MCF 10A (cell line): ENCODE measurements at regions of chr3 and their contacts with region 1.

Region 1: GRCh38 chr3:25648107-25648535 is 16.6 kb downstream of the TOP2B start:
- DNase-seq: peak; percentile 85
- H3K4me3 Mint-ChIP-seq: no peak overlapping the region
- H3K27ac Mint-ChIP-seq: no peak overlapping the region
- H3K4me1 Mint-ChIP-seq: peaks cover 15% of the 10 kb centered on the region
- H3K27me3 Mint-ChIP-seq: no peaks in the 10 kb centered on the region
- CTCF ChIP-seq: peak; percentile 86

Region 2: GRCh38 chr3:25372167-25372566 is 276.0 kb before region 1 on chr3:
- CTCF ChIA-PET with region 1: no interaction called
- POLR2A ChIA-PET with region 1: no interaction called
- intact Hi-C with region 1: no loop called
- DNase-seq: peak; percentile 14
- H3K4me3 Mint-ChIP-seq: no peak overlapping the region
- H3K27ac Mint-ChIP-seq: no peak overlapping the region
- H3K4me1 Mint-ChIP-seq: no peaks in the 10 kb centered on the region
- H3K27me3 Mint-ChIP-seq: no peaks in the 10 kb centered on the region
- CTCF ChIP-seq: no peak

Region 3: DNA sequence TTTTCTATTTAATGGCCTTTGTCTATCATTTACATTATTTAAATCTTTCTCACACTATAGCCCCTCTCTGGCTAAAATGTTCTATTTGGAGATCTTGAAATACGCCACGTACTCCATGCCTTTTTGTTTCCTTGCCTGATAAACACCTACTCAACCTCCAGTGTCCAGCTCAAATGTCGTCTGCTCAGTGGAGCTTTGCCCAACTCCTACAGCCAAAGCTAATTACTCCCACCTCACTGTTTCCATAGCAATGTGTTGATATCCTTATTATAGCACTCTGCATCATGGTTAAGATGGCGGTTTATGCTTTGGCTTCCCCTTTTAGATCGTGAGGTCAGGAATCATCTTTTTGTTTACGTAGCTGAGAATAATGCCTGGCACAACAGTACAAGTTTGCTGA is 79.2 kb after region 1 on chr3:
- CTCF ChIA-PET with region 1: interaction called, 13 read pairs
- POLR2A ChIA-PET with region 1: no interaction called
- intact Hi-C with region 1: no loop called
- DNase-seq: no peak
- H3K4me3 Mint-ChIP-seq: no peak overlapping the region
- H3K27ac Mint-ChIP-seq: no peak overlapping the region
- H3K4me1 Mint-ChIP-seq: no peaks in the 10 kb centered on the region
- H3K27me3 Mint-ChIP-seq: no peaks in the 10 kb centered on the region
- CTCF ChIP-seq: no peak

Region 4: DNA sequence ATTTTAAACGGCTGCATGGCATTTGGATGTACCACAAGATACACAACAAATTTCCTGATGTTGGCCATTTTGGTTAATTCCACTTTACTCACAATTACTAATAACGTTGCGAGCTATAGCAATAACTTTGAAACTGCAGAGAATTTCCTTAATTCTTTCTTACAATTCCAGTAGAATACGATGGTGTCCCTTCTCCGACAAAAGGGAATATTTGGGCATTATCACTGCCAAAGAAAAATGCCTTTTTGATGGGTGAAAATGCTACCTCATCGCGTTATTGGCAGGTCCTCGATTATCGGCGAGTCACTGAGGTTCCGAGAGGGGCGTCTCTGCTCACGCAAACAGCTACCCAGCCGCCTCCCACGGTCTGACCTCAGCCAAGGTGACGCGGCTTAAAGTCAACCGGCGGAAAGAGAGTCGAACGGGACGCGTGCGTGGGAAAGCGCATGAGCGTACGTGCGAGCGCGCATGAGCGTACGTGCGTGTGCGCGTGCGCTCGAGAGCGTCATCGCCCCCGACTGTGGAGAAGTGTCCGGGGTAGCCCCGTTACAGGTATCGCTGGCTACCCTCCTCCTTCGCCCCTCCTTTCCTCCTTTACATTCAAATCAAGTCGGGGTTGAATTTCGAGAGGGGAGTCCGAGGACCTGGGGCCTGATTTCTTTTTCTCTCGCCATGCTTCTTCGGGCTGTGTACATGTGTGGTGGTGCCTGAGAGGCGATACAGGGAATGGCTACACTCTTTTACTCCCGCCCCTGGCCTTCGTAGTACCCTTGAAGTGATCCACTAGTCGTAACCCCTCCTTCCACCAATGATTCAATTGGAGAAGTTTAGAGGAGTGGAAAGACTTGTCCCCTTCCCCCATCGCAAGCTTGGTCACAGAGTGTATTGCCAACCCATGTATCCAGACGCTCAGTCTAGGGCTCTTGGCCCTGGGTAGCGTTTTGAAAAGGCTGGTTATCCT is 141.8 kb after region 1 on chr3 and contains the start of gene OXSM:
- CTCF ChIA-PET with region 1: interaction called, 14 read pairs
- POLR2A ChIA-PET with region 1: interaction called, 5 read pairs
- intact Hi-C with region 1: no loop called
- DNase-seq: peak; percentile 88
- H3K4me3 Mint-ChIP-seq: peak within 1 kb of the TSS; percentile 85
- H3K27ac Mint-ChIP-seq: peak within 1 kb of the TSS; percentile 94
- H3K4me1 Mint-ChIP-seq: peaks cover 32% of the 10 kb centered on the region
- H3K27me3 Mint-ChIP-seq: no peaks in the 10 kb centered on the region
- CTCF ChIP-seq: no peak
- total RNA-seq, gene OXSM: 21.7 and 22.4 TPM in 2 replicates

Region 5: DNA sequence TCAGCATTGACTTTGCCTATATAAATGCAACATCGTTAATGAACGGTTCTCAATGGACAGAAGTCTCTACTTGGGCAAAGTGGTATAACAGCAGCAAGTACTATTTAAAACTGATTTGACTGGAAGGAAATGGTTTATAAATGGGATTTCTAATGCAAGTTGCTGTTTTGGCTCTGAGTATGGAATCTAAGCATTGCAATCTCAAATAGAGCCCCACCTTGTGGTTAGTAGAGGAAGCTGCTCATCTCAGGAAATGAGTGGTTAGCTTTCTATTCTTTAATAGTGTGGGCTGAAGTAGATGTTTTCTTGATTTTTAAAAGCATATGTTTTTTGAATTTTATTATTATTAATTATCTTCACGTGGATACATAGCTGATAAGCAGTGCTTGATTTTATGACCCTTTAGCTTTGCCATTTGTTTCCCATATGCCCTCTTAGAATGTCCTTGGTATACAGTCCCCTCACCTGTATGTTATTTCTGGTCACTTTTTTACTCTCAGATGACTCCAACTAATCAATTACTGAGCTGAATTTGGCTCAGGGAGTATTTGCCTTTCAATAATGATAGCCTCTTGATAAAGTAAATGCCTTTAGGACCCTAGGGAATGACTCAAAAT is 208.9 kb after region 1 on chr3:
- CTCF ChIA-PET with region 1: interaction called, 40 read pairs
- POLR2A ChIA-PET with region 1: no interaction called
- intact Hi-C with region 1: loop called (anchors 1 kb)
- DNase-seq: peak; percentile 49
- H3K4me3 Mint-ChIP-seq: no peak overlapping the region
- H3K27ac Mint-ChIP-seq: no peak overlapping the region
- H3K4me1 Mint-ChIP-seq: peaks cover 9% of the 10 kb centered on the region
- H3K27me3 Mint-ChIP-seq: no peaks in the 10 kb centered on the region
- CTCF ChIP-seq: peak; percentile 59

Region 6: DNA sequence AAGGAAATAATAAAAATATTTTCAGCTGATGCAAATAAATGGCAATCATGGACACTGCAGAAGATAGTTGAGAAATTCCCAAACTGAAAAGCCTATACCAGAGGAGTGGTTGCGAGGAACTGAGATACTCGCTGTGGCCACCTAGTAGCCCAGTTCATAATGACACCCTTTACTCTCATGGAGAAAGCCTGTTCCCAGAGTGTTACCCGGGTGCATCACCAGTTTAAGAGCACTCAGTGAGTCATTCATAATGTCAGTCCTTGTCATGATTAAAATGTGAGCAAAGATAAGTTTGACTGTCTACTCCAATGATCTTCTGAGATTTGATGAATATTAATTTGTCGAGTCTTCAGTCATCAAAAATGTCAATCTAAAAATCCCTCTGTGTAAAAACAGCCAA is 836.0 kb after region 1 on chr3:
- CTCF ChIA-PET with region 1: no interaction called
- POLR2A ChIA-PET with region 1: no interaction called
- intact Hi-C with region 1: loop called (anchors 1 kb)
- DNase-seq: peak; percentile 42
- H3K4me3 Mint-ChIP-seq: no peak overlapping the region
- H3K27ac Mint-ChIP-seq: no peak overlapping the region
- H3K4me1 Mint-ChIP-seq: no peaks in the 10 kb centered on the region
- H3K27me3 Mint-ChIP-seq: no peaks in the 10 kb centered on the region
- CTCF ChIP-seq: peak; percentile 33